IMR-90 (cell line): ENCODE measurements at regions of chr7 and their contacts with region 1.

Region 1: GRCh38 chr7:1412322-1413261 is 46.7 kb downstream of the MICALL2 start:
- DNase-seq: peak; percentile 71
- ATAC-seq: peak; percentile 99
- H3K4me3 ChIP-seq: no peak overlapping the region
- H3K27ac ChIP-seq: no peak overlapping the region
- H3K4me1 ChIP-seq: no peaks in the 10 kb centered on the region
- H3K27me3 ChIP-seq: peaks cover 35% of the 10 kb centered on the region
- CTCF ChIP-seq: peak; percentile 82
- POLR2A ChIP-seq: no peak
- RAD21 ChIP-seq: peak; percentile 75

Region 2: DNA sequence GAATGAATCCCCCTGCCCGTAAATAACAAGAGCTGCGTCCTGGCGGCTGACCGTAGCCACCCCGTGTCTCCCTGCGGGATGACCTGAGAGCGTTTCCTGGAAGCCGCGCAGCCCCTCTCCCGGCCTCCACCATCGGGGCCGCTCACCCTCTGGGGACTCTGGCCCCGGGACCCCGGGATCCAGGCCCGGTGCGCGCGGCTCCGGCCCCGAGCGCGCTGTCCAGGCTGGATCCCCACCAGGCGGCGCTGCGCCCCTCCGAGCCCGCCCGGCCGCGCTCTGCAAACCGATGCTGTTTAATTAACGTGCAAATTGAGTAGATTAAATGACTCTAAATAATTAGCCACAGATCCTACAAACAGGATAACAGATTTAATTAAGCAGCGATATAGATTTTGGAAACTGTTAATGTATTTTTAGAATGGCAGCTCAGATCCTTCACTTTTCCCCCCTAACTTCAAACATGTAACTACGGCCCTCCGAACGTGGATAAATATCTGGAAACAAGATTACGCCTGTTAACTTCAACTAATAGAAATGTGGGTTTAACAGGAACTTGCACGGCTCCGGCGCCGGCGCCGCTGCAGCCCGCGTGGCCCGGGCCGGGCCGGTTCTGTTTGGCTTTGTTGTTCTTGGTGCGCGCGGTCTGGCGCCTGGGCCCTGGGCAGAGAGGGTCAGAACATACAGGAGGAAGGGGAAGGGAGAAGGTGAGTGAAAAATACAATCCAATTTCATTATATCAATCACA is 187.0 kb before region 1 on chr7:
- CTCF ChIA-PET with region 1: no interaction called
- POLR2A ChIA-PET with region 1: no interaction called
- dilution Hi-C with region 1: no loop called
- in situ Hi-C with region 1: no loop called
- intact Hi-C with region 1: loop called (anchors 10 kb)
- DNase-seq: no peak
- ATAC-seq: no peak; the same call in 1 of the 2 replicates
- H3K4me3 ChIP-seq: no peak overlapping the region
- H3K27ac ChIP-seq: no peak overlapping the region
- H3K4me1 ChIP-seq: peaks cover 2% of the 10 kb centered on the region; the same call in 1 of the 2 replicates
- H3K27me3 ChIP-seq: peaks cover 87% of the 10 kb centered on the region
- CTCF ChIP-seq: peak; percentile 55
- POLR2A ChIP-seq: no peak
- RAD21 ChIP-seq: peak; percentile 55

Region 3: GRCh38 chr7:1691601-1692514 is 279.3 kb after region 1 on chr7:
- CTCF ChIA-PET with region 1: no interaction called
- POLR2A ChIA-PET with region 1: no interaction called
- dilution Hi-C with region 1: no loop called
- in situ Hi-C with region 1: no loop called
- intact Hi-C with region 1: no loop called
- DNase-seq: no peak
- ATAC-seq: no peak
- H3K4me3 ChIP-seq: no peak overlapping the region
- H3K27ac ChIP-seq: no peak overlapping the region
- H3K4me1 ChIP-seq: no peaks in the 10 kb centered on the region
- H3K27me3 ChIP-seq: peaks cover 3% of the 10 kb centered on the region; the same call in 1 of the 2 replicates
- CTCF ChIP-seq: no peak
- POLR2A ChIP-seq: no peak
- RAD21 ChIP-seq: no peak